Activated B cell treated with CpG ODN at 0.5 μM for 24 hours (primary cell): ENCODE measurements at regions of chr20 and their contacts with region 1.

Region 1: GRCh38 chr20:15200147-15200565 is 862.7 kb upstream of the FLRT3 start:
- DNase-seq: no peak
- ATAC-seq: peak; percentile 55
- H3K4me3 Mint-ChIP-seq: no peak overlapping the region
- H3K27ac Mint-ChIP-seq: peak overlapping the region; percentile 11
- H3K4me1 Mint-ChIP-seq: peaks cover 28% of the 10 kb centered on the region
- H3K27me3 Mint-ChIP-seq: no peaks in the 10 kb centered on the region
- CTCF ChIP-seq: no peak

Region 2: GRCh38 chr20:14829906-14830305 is 370.2 kb before region 1 on chr20:
- CTCF ChIA-PET with region 1: no interaction called
- POLR2A ChIA-PET with region 1: no interaction called
- intact Hi-C with region 1: loop called (anchors 1 kb)
- DNase-seq: no peak
- ATAC-seq: peak; percentile 51
- H3K4me3 Mint-ChIP-seq: no peak overlapping the region
- H3K27ac Mint-ChIP-seq: peak overlapping the region; percentile 12
- H3K4me1 Mint-ChIP-seq: peaks cover 22% of the 10 kb centered on the region
- H3K27me3 Mint-ChIP-seq: peaks cover 2% of the 10 kb centered on the region
- CTCF ChIP-seq: no peak

Region 3: GRCh38 chr20:15162079-15162647 is 38.0 kb before region 1 on chr20:
- CTCF ChIA-PET with region 1: no interaction called
- POLR2A ChIA-PET with region 1: no interaction called
- intact Hi-C with region 1: loop called (anchors 2 kb)
- DNase-seq: no peak
- ATAC-seq: peak; percentile 42
- H3K4me3 Mint-ChIP-seq: peak overlapping the region; percentile 76
- H3K27ac Mint-ChIP-seq: no peak overlapping the region
- H3K4me1 Mint-ChIP-seq: peaks cover 12% of the 10 kb centered on the region
- H3K27me3 Mint-ChIP-seq: no peaks in the 10 kb centered on the region
- CTCF ChIP-seq: no peak

Region 4: DNA sequence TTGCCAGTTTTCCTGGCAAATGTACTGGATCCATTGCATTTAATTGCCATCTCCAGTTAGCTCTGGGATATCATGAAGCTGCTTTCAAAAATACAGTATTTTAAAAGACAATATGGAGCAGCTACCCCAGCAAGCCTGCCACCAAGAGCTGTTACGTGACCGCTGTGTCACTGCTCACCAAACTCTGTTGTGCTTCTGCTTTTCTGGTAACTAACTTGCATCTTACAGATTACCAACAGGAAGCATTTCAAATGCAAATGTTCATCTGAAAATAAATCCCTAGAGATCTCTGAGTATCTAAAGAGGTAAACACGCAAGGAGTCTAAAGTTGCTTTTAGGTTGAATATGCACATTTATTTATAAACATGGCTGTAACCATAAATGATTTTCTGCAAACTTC is 364.8 kb after region 1 on chr20:
- CTCF ChIA-PET with region 1: no interaction called
- POLR2A ChIA-PET with region 1: no interaction called
- intact Hi-C with region 1: loop called (anchors 10 kb)
- DNase-seq: no peak
- ATAC-seq: peak; percentile 91
- H3K4me3 Mint-ChIP-seq: no peak overlapping the region
- H3K27ac Mint-ChIP-seq: no peak overlapping the region
- H3K4me1 Mint-ChIP-seq: peaks cover 12% of the 10 kb centered on the region
- H3K27me3 Mint-ChIP-seq: peaks cover 11% of the 10 kb centered on the region
- CTCF ChIP-seq: no peak